ENCODE measurements at regions of chr18 and their contacts with region 1.

Region 1: DNA sequence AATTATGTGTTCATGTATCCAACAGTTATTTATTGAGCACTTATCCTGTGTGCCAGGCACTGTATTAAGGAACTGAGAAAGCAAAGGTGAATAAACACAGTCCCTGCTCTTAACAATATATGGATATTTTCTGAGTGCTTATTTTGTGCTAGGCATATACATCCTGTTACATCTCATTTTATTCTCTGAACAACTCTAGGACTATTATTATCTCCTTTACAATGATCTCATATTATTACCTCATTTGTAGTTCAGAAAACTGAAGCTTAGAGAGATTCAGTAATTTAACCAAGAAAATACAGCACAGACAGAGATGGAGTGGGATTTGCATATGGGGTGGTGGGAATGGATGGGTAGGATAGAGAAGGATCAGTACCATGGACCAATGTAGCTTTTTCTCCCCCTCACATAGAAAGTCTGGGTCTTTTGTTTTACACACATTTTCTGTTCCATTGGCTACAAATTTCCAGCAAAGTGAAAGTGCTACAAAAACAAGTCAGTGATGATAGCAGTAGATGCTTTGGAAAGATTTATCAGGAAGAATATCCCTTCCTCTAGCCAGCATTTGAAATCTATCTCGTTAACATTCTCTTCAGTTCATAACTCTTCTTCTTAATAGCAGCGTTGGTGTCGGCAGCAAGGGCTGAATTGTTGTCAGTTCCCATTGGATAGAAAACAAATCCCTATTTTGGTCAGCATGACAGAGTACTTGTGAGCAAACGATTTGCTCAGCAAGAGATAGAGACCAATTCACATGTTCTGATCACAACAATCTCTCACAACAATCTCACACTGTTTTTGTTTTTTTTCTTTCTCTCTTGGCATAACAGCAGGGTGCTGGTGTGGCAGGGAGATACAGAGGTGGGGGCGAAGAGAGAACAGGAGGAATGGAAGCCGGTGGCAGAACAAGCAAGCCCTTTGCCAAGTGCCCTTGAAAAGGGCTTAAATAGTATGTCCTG is 102.2 kb upstream of the KCTD1 start:
- DNase-seq: no peak
- H3K4me3 ChIP-seq: no peak overlapping the region
- CTCF ChIP-seq: no peak

Region 2: GRCh38 chr18:26307189-26307773 is 343.3 kb before region 1 on chr18:
- CTCF ChIA-PET with region 1: interaction called, 12 read pairs
- POLR2A ChIA-PET with region 1: no interaction called
- DNase-seq: no peak
- H3K4me3 ChIP-seq: no peak overlapping the region
- CTCF ChIP-seq: peak; percentile 71

Region 3: DNA sequence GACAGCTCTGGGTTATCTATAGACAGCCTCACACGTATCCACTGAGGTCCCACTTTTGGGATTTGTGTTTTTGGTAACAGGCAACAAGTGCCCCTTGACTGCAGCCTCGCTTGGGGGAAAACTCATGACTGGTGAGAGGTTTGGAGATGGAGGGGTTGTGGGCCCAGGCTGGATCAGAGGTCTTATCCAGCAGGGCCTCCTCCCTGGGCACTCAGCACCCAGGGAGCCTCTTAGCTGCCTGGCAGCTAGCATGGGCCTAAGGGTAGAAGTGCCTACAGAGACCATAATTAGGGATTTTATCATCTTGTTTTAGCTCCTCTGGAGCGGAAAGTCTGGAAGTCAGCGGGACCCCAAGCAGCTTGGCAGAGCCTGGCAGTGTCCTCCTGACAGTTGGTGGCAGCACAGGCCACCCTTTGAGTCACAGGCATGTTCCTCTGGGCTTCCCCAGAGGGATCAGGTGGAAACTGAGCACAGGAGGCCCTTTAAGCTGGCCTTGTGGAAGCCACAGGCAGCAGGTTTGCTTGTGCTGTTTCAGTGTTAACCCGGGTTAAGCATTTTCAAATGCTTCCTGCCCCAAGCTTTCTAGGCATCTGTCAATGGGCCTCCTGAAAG is 245.3 kb before region 1 on chr18:
- CTCF ChIA-PET with region 1: interaction called, 28 read pairs
- POLR2A ChIA-PET with region 1: no interaction called
- DNase-seq: no peak
- H3K4me3 ChIP-seq: no peak overlapping the region
- CTCF ChIP-seq: peak; percentile 57